Common myeloid progenitor, CD34-positive (primary cell): ENCODE measurements at regions of chr9 and their contacts with region 1.

Region 1: DNA sequence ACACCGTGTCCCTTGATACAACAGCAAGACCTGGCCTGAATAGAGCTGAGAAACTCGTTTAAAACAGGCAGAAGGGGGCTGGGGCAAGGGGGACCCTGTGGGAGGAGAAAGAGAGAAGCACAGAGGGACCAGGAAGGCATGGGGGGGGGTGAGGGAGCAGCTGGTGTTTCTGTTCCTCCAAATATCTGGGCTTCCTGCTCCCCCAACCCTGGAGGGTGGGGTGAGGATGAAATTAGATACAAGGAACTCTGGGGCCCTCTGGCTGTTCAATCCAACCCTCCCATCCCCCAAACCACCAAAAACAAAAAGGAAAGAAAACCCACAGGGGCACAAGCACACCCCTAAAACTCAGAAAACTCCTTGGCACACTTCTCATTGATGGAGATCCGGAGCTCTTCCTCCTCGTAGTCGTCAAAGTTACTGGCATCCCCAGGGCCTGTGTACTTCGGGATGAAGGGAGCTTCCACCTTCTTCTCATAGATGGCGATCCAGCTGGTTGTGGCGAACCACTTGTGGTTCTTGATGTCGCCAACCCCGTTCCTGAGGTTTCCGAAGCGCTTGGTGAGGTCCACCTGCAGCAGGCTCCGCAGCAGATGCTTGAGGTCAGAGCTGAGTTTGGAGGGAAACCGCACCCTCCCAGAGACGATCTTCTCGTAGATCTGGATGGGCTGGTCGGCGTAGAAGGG is 1.1 kb downstream of the PRKACG start:
- DNase-seq: peak; percentile 58 to 96 (median 94)
- H3K4me3 ChIP-seq: peak overlapping the region in 2 of 7 experiments; percentile 22 to 26
- H3K27ac ChIP-seq: no peak overlapping the region
- H3K4me1 ChIP-seq: peaks cover 0 to 29% (median 17%) of the 10 kb centered on the region in 4 experiments
- H3K27me3 ChIP-seq: peaks cover 0 to 5% (median 0%) of the 10 kb centered on the region in 5 experiments

Region 2: GRCh38 chr9:69027355-69028096 is 14.7 kb after region 1 on chr9:
- CTCF ChIA-PET with region 1: interaction called, 12 read pairs
- POLR2A ChIA-PET with region 1: interaction called, 4 read pairs
- DNase-seq: peak; percentile 77 to 85 (median 84)
- H3K4me3 ChIP-seq: no peak overlapping the region
- H3K27ac ChIP-seq: no peak overlapping the region
- H3K4me1 ChIP-seq: peaks cover 11 to 43% (median 26%) of the 10 kb centered on the region in 4 experiments
- H3K27me3 ChIP-seq: no peaks in the 10 kb centered on the region

Region 3: DNA sequence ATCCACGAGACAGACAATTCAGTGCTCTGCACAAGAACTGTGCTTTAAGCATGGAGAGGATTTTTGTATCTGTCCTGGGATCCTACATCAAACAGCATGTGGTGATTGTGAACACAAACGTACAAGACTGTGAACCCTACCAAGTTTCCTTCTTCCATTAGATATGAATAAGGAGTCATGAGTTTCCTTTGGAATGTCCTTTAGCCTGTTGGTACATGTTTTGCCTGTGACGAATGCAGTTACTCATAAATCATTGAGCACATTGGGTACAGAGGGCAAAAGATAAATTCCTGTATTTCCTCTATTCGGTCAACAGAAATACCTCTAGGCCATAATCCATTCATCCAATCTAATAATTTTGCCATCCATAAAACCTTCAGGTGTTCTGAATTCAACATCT is 84.2 kb after region 1 on chr9:
- CTCF ChIA-PET with region 1: no interaction called
- POLR2A ChIA-PET with region 1: no interaction called
- DNase-seq: no peak
- H3K4me3 ChIP-seq: no peak overlapping the region
- H3K27ac ChIP-seq: no peak overlapping the region
- H3K4me1 ChIP-seq: no peaks in the 10 kb centered on the region
- H3K27me3 ChIP-seq: no peaks in the 10 kb centered on the region